ENCODE measurements at regions of chr10 and their contacts with region 1.

Region 1: GRCh38 chr10:45249978-45250693 is 65.3 kb downstream of the OR13A1 start:
- DNase-seq: peak; percentile 46 to 77
- H3K4me3 ChIP-seq: peak overlapping the region; percentile 48; the same call in 1 of the 2 replicates
- H3K27ac ChIP-seq: no peak overlapping the region
- H3K4me1 ChIP-seq: no peaks in the 10 kb centered on the region
- H3K27me3 ChIP-seq: no peaks in the 10 kb centered on the region
- CTCF ChIP-seq: peak; percentile 94

Region 2: DNA sequence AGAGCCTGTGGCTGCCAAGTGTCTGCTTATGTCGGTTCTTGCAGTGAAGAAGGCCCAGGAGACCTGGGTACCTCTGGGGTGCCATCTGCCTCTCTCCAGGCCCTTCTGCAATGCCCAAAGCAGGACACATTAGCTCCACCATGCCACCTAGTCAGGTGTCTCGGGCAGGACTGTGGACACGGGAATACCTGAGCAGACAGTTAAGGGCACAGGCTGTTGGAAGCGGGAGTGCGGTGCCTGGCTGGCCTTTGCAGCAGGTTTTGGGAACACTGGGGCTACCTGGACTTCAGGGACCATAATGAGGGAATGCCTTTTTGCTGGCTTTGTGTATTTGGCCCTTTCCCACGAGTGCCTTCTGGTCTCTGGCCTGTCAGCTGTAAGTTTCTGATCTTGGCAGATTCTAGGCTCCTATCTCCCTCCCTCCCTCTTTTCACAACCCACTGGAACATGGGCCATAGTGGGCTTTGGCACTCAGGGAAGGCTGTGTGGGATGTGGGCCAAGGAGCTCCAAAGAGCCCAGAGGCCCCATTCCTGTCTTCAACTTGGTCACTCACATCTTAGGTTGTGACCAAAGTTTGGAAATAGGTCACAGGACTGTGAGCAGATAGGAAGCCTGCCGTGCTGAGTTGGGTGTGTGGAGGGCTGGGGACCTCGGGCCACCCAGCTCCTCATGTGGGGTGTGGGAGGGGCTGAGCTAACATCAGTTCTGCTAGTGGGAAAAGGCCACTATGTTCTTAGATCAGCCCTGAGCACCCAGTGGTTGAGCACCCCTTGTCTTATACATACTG is 823.7 kb before region 1 on chr10:
- CTCF ChIA-PET with region 1: no interaction called
- POLR2A ChIA-PET with region 1: no interaction called
- intact Hi-C with region 1: no loop called
- DNase-seq: no peak
- H3K4me3 ChIP-seq: no peak overlapping the region
- H3K27ac ChIP-seq: no peak overlapping the region
- H3K4me1 ChIP-seq: no peaks in the 10 kb centered on the region
- H3K27me3 ChIP-seq: 0 out of 2 replicates have a peak, but pooled peaks cover 22% of the 10 kb centered on the region
- CTCF ChIP-seq: no peak

Region 3: GRCh38 chr10:45672181-45673073 is 422.3 kb after region 1 on chr10 and contains the start of gene ZFAND4:
- CTCF ChIA-PET with region 1: interaction called, 3 read pairs
- POLR2A ChIA-PET with region 1: no interaction called
- intact Hi-C with region 1: loop called (anchors 10 kb)
- DNase-seq: peak; percentile 88 to 97
- H3K4me3 ChIP-seq: peak within 1 kb of the TSS; percentile 70
- H3K27ac ChIP-seq: 0 out of 2 replicates have a peak within 1 kb of the TSS, but pooled peaks have one; percentile 7
- H3K4me1 ChIP-seq: peaks cover 8% of the 10 kb centered on the region; the same call in 1 of the 2 replicates
- H3K27me3 ChIP-seq: no peaks in the 10 kb centered on the region
- CTCF ChIP-seq: peak; percentile 52; the same call in 1 of the 2 replicates
- total RNA-seq, gene ZFAND4: 3.5 and 4.4 TPM in 2 replicates

Region 4: DNA sequence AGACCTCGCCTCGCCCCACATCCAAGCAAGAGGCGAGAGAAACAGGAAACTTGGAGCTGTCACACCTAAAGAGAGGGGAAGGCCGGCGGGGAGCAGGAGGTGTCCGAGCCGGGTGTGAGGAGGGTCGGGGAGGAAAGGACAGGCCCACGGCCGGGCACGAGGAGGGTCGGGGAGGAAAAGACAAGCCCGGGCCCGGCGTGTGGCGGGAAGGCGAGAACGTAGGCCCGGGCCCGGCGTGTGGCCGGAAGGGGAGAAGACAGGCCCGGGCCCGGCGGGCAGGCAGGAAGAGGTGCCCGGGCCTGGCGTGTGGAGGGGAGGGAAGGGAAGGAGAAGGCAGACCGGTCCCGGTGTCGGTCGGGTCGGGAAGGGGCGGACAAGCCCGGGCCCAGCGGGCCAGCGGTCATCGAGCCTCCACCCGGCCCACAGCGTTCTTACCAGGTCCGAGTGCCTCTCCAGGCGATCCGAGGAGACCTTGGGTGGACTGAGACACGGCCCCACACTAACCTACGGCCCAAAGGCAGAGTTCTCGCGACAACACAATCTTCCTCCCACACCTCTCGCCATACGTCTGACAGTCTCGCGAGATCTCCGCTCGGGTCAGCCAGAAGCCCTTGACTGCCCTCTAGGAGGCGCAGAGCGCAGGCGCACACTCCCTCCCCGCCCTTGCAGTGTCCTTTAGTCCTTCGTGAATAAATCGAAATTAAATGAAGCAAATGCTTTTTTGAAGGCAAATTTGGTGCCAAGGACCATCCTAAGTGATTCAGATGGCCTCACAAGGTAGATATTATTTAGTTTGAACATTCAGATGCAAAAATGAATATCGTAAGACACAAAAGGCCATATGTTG is 780.2 kb after region 1 on chr10 and contains the start of gene NCOA4:
- CTCF ChIA-PET with region 1: interaction called, 7 read pairs
- POLR2A ChIA-PET with region 1: no interaction called
- intact Hi-C with region 1: loop called (anchors 5 kb)
- DNase-seq: peak; percentile 91 to 96
- H3K4me3 ChIP-seq: peak within 1 kb of the TSS; percentile 97
- H3K27ac ChIP-seq: peak within 1 kb of the TSS; percentile 62
- H3K4me1 ChIP-seq: peaks cover 28% of the 10 kb centered on the region
- H3K27me3 ChIP-seq: no peaks in the 10 kb centered on the region
- CTCF ChIP-seq: peak; percentile 77
- total RNA-seq, gene NCOA4: 142 and 143 TPM in 2 replicates